Naive thymus-derived CD4-positive, alpha-beta T cell (primary cell): ENCODE measurements at regions of chr1 and their contacts with region 1.

Region 1: DNA sequence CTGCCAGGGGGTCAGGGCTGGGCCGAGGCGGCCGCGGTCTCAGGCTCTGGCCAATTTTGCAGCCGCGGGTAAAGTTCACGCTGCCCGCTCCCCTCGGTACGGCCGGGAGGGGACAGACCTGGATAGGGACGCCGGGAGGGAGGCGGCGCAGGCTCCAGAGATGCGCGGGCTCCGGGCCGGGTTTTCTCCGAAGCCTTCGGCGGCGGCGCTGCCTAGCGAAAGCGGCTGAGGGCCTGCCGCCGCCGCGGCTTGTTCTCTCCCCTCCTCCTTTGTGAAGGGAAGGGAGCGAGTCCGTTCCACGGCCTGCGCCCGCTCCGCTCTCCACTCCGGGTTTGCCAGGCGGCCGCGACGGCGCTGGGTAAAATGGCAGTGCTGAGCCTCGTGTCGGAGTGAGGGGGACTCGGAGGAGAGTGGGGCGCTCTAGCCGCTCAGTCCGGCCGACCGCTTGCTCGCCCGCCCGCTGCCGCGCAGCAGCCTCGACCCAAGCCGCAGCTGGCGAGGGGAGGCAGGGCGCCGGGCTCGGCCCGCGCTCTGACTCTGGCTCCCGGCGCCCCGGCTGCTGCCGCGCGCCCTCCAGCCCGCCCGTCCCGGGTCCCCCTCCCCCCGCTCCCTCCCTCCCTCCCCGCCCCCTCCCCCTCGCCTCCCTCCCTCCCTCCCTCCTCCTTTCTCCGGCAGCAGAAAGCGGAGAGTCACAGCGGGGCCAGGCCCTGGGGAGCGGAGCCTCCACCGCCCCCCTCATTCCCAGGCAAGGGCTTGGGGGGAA is at the start of gene ARID1A:
- DNase-seq: peak; percentile 94 to 98 (median 98)
- ATAC-seq: peak; percentile 81
- H3K4me3 ChIP-seq: peak within 1 kb of the TSS; percentile 81
- H3K4me3 Mint-ChIP-seq: peak within 1 kb of the TSS in 9 of 10 donors; percentile 94 to 97 (median 94)
- H3K27ac ChIP-seq: peak within 1 kb of the TSS; percentile 83
- H3K27ac Mint-ChIP-seq: peak within 1 kb of the TSS; percentile 93 to 98 (median 95)
- H3K4me1 ChIP-seq: peaks cover 36 to 39% of the 10 kb centered on the region in 2 donors
- H3K4me1 Mint-ChIP-seq: peaks cover 14 to 35% (median 31%) of the 10 kb centered on the region in 7 donors
- H3K27me3 ChIP-seq: no peaks in the 10 kb centered on the region
- H3K27me3 Mint-ChIP-seq: no peaks in the 10 kb centered on the region
- total RNA-seq, gene ARID1A: 118 to 148 (median 131) TPM

Region 2: GRCh38 chr1:26126321-26127084 is 569.0 kb before region 1 on chr1:
- CTCF ChIA-PET with region 1: no interaction called
- POLR2A ChIA-PET with region 1: no interaction called
- intact Hi-C with region 1: loop called in 1 of 2 experiments (anchors 10 kb)
- DNase-seq: peak in 8 of 9 donors; percentile 33 to 94 (median 90)
- ATAC-seq: peak; percentile 99
- H3K4me3 ChIP-seq: no peak overlapping the region
- H3K4me3 Mint-ChIP-seq: peak overlapping the region; percentile 60 to 91 (median 78)
- H3K27ac ChIP-seq: peak overlapping the region; percentile 61
- H3K27ac Mint-ChIP-seq: peak overlapping the region; percentile 86 to 98 (median 95)
- H3K4me1 ChIP-seq: peaks cover 19 to 24% of the 10 kb centered on the region in 2 donors
- H3K4me1 Mint-ChIP-seq: peaks cover 25 to 55% (median 52%) of the 10 kb centered on the region in 7 donors
- H3K27me3 ChIP-seq: no peaks in the 10 kb centered on the region
- H3K27me3 Mint-ChIP-seq: peaks cover 0 to 13% (median 0%) of the 10 kb centered on the region in 5 donors

Region 3: GRCh38 chr1:26404631-26405030 is 290.9 kb before region 1 on chr1:
- CTCF ChIA-PET with region 1: no interaction called
- POLR2A ChIA-PET with region 1: no interaction called
- intact Hi-C with region 1: no loop called
- DNase-seq: no peak
- ATAC-seq: no peak
- H3K4me3 ChIP-seq: no peak overlapping the region
- H3K4me3 Mint-ChIP-seq: no peak overlapping the region
- H3K27ac ChIP-seq: no peak overlapping the region
- H3K27ac Mint-ChIP-seq: no peak overlapping the region
- H3K4me1 ChIP-seq: peaks cover 10% of the 10 kb centered on the region in 2 donors
- H3K4me1 Mint-ChIP-seq: peaks cover 11 to 14% (median 13%) of the 10 kb centered on the region in 7 donors
- H3K27me3 ChIP-seq: peaks cover 0 to 9% of the 10 kb centered on the region in 2 donors
- H3K27me3 Mint-ChIP-seq: peaks cover 17 to 61% (median 32%) of the 10 kb centered on the region in 5 donors

Region 4: DNA sequence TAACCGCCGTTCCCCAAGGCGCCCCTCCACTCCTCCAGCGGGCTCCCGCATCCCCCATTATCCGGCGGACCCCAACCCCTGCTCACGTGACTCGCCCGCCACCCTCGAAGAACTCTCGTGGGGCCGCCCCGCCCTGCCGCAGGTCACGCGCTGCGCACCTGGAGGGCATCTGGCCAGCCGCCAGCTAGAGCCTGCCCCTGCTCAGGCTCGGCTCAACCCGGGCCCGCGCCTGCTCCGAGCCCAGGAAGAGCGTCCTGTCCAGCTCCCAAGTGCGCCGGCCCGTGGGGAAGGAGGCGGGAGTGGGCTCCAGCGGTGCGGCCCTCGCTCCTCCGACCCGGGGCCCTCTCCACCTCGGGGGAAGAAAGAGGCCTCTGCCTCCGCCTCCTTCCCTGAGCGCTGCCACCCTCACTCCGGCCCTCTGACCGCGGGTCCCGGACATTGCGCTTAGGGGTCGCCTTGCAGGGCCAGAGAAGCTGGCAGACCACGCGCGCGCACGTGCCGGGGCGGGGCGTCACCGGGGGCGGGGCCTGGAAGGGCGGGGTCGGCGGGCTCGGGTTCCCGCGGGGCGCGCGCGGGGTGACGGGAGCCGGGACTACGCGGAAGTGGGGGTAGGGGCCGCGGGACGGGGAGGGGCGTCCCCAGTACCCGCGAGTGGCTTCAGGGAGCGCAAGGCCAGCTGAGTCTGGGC is 194.9 kb before region 1 on chr1:
- CTCF ChIA-PET with region 1: no interaction called
- POLR2A ChIA-PET with region 1: interaction called, 7 read pairs
- intact Hi-C with region 1: loop called (anchors 1 to 10 kb)
- DNase-seq: peak; percentile 76 to 97 (median 86)
- ATAC-seq: peak; percentile 89
- H3K4me3 ChIP-seq: peak overlapping the region; percentile 95
- H3K4me3 Mint-ChIP-seq: peak overlapping the region; percentile 67 to 91 (median 88)
- H3K27ac ChIP-seq: peak overlapping the region; percentile 90
- H3K27ac Mint-ChIP-seq: peak overlapping the region; percentile 67 to 95 (median 91)
- H3K4me1 ChIP-seq: peaks cover 16% of the 10 kb centered on the region in 2 donors
- H3K4me1 Mint-ChIP-seq: peaks cover 1 to 31% (median 11%) of the 10 kb centered on the region in 7 donors
- H3K27me3 ChIP-seq: no peaks in the 10 kb centered on the region
- H3K27me3 Mint-ChIP-seq: no peaks in the 10 kb centered on the region

Region 5: GRCh38 chr1:26705788-26706311 is 10.3 kb after region 1 on chr1:
- CTCF ChIA-PET with region 1: interaction called, 3 read pairs
- POLR2A ChIA-PET with region 1: interaction called, 21 read pairs
- intact Hi-C with region 1: loop called in 1 of 2 experiments (anchors 1 kb)
- DNase-seq: no peak
- ATAC-seq: peak; percentile 31
- H3K4me3 ChIP-seq: no peak overlapping the region
- H3K4me3 Mint-ChIP-seq: peak overlapping the region in 9 of 10 donors; percentile 26 to 80 (median 74)
- H3K27ac ChIP-seq: peak overlapping the region; percentile 20
- H3K27ac Mint-ChIP-seq: peak overlapping the region in 8 of 9 donors; percentile 21 to 77 (median 68)
- H3K4me1 ChIP-seq: peaks cover 59 to 61% of the 10 kb centered on the region in 2 donors
- H3K4me1 Mint-ChIP-seq: peaks cover 19 to 47% (median 30%) of the 10 kb centered on the region in 7 donors
- H3K27me3 ChIP-seq: no peaks in the 10 kb centered on the region
- H3K27me3 Mint-ChIP-seq: no peaks in the 10 kb centered on the region

Region 6: DNA sequence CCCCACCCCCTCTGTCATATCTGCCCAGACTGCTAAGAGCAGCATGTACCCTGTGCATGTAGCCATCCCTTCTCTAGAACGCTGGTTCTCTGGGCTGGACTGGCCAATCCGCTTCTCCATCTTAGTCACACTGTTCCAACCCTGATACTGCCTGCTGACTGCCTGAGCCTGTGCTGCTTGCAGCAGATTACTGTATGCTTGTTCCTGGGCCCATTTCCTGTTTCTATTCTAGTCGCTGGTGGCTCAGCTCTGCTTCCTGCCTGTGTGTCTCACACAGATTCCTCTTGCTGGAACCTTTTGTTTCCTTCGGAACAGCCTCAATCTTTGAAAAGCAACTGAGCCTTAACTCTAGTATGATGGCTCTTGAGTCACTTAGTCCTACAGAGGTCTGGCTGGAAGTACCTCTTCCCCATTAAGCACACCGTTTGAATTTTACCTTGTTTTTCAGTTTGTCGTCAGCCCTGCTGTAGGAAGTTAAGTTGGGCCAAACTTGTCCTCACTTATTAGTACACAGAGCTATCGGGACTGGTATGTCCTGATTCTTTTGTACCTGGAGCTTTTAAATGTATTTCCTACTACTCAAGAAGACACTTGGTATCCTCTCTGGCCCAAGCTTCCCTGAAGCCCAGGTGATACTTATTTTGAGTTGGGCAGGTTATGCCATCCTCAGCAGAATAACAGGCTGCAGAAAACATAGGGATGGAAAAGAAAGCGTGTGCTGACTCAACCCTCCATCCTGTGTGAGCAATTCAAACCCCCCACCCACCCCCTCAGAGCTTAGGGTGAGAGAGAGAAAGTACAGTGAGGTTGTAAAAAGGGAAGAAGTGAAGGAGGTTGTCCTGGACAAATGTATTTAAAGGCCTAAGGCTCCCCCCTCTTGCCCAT is 48.8 kb after region 1 on chr1:
- CTCF ChIA-PET with region 1: interaction called, 14 read pairs
- POLR2A ChIA-PET with region 1: interaction called, 55 read pairs
- intact Hi-C with region 1: loop called (anchors 1 kb)
- DNase-seq: peak; percentile 30 to 86 (median 79)
- ATAC-seq: peak; percentile 97
- H3K4me3 ChIP-seq: peak overlapping the region; percentile 39
- H3K4me3 Mint-ChIP-seq: peak overlapping the region; percentile 69 to 86 (median 77)
- H3K27ac ChIP-seq: peak overlapping the region; percentile 62
- H3K27ac Mint-ChIP-seq: peak overlapping the region; percentile 56 to 97 (median 90)
- H3K4me1 ChIP-seq: peaks cover 44 to 84% of the 10 kb centered on the region in 2 donors
- H3K4me1 Mint-ChIP-seq: peaks cover 59 to 96% (median 85%) of the 10 kb centered on the region in 7 donors
- H3K27me3 ChIP-seq: no peaks in the 10 kb centered on the region
- H3K27me3 Mint-ChIP-seq: no peaks in the 10 kb centered on the region

Region 7: GRCh38 chr1:26787706-26788514 is 92.4 kb after region 1 on chr1 and contains the start of gene PIGV:
- CTCF ChIA-PET with region 1: interaction called, 60 read pairs
- POLR2A ChIA-PET with region 1: interaction called, 383 read pairs
- intact Hi-C with region 1: loop called (anchors 1 kb)
- DNase-seq: peak; percentile 81 to 95 (median 90)
- ATAC-seq: peak; percentile 84
- H3K4me3 ChIP-seq: peak within 1 kb of the TSS; percentile 91
- H3K4me3 Mint-ChIP-seq: peak within 1 kb of the TSS; percentile 81 to 99 (median 90)
- H3K27ac ChIP-seq: peak within 1 kb of the TSS; percentile 95
- H3K27ac Mint-ChIP-seq: peak within 1 kb of the TSS; percentile 87 to 100 (median 99)
- H3K4me1 ChIP-seq: peaks cover 41 to 42% of the 10 kb centered on the region in 2 donors
- H3K4me1 Mint-ChIP-seq: peaks cover 38 to 74% (median 69%) of the 10 kb centered on the region in 7 donors
- H3K27me3 ChIP-seq: no peaks in the 10 kb centered on the region
- H3K27me3 Mint-ChIP-seq: no peaks in the 10 kb centered on the region
- total RNA-seq, gene PIGV: 8.4 to 17.9 (median 16.7) TPM

Region 8: DNA sequence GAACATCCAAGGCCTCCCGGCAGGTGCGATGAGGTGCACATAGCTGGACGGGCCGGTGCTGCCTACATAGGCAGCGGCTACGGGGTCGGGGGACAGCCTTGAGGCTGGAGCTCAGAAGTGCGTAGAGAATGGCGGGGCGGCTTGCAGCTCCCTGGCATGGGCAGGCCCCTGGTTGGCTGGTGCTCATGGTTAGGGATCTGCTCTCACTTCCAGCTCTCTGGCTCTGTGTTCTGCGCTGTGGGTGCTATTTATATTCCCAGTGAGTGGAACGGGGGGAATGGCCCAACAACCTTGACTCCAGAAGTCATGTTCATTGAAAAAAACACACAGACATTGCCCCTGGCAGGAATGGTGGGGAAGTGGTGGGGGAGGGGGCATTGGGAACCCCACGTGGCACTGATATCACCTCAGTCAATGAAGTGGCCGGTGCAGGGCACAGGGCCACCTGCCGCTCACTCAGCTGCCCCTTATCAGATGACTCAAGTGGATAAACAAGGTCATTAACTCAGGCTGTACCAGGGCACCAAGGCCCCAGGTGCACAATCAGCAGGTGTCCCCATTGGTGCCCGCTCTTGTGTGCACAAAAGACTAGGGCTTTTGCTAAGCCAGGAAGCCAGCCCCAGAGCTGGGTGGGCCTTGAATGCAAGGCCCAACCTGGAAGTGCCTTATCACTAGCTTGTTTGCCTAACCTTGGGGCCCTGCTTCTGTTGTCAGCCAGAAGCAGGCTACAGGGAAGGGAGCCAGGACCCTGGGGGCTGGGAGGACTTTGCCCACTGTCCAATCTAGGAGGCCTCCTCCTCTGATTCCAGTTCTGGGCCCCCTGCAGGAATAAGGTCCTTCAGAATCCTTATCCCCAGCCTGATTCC is 218.4 kb after region 1 on chr1 and contains the start of gene NR0B2:
- CTCF ChIA-PET with region 1: no interaction called
- POLR2A ChIA-PET with region 1: no interaction called
- intact Hi-C with region 1: no loop called
- DNase-seq: no peak
- ATAC-seq: no peak
- H3K4me3 ChIP-seq: no peak within 1 kb of the TSS
- H3K4me3 Mint-ChIP-seq: no peak within 1 kb of the TSS
- H3K27ac ChIP-seq: no peak within 1 kb of the TSS
- H3K27ac Mint-ChIP-seq: no peak within 1 kb of the TSS
- H3K4me1 ChIP-seq: no peaks in the 10 kb centered on the region
- H3K4me1 Mint-ChIP-seq: no peaks in the 10 kb centered on the region
- H3K27me3 ChIP-seq: no peaks in the 10 kb centered on the region
- H3K27me3 Mint-ChIP-seq: peaks cover 0 to 6% (median 0%) of the 10 kb centered on the region in 5 donors
- total RNA-seq, gene NR0B2: not detected

Region 9: DNA sequence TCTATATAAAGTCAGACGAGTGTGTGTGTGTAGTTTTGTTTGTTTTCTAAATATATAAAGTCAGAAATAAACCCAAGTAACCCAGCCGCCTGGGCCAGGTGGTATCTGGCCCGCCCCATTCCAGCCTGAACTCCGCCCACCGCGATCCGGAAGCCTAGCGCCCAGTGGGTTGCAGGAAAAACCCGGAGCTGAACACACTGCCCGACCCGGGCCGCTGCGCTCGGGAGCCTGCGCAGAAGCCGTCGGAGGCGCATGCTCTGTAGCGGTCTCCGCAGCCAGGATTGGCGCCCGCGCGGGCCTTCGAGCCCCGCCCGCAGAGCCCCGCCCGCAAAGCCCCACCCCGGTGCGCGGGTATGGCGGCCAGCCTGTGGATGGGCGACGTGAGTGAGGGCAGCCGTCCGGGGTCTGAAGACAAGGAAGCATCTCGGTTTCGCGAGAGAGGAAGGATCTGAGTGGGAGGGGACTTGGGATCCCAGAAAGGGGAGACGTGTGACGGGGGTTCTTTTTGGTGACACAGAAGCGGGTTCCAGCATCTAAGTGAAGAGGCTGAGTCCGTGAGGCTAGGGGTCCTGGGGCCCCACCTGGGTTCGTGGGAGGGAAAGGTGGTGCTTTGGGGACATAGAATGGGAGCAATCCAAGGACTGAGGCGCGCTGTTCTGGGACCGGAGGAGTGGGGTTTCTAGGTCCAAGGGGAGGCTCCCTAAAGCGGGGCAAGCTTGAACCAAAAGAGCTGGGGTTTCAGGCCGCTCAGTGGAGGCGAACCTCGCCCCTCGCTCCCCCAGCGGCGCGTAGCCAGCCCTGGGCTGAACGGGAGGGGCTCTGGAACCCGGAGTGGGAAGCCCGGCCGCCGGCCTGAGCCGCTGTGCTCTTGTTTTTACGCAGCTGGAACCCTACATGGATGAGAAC is 1857.5 kb after region 1 on chr1 and contains the start of gene TRNAU1AP:
- CTCF ChIA-PET with region 1: no interaction called
- POLR2A ChIA-PET with region 1: no interaction called
- intact Hi-C with region 1: loop called (anchors 5 to 10 kb)
- DNase-seq: peak; percentile 92 to 98 (median 97)
- ATAC-seq: peak; percentile 98
- H3K4me3 ChIP-seq: peak within 1 kb of the TSS; percentile 95
- H3K4me3 Mint-ChIP-seq: peak within 1 kb of the TSS; percentile 94 to 99 (median 98)
- H3K27ac ChIP-seq: peak within 1 kb of the TSS; percentile 81
- H3K27ac Mint-ChIP-seq: peak within 1 kb of the TSS; percentile 94 to 99 (median 98)
- H3K4me1 ChIP-seq: peaks cover 0 to 15% of the 10 kb centered on the region in 2 donors
- H3K4me1 Mint-ChIP-seq: peaks cover 10 to 26% (median 19%) of the 10 kb centered on the region in 7 donors
- H3K27me3 ChIP-seq: no peaks in the 10 kb centered on the region
- H3K27me3 Mint-ChIP-seq: no peaks in the 10 kb centered on the region
- total RNA-seq, gene TRNAU1AP: 27.6 to 52.5 (median 40.9) TPM